AG04450 (cell line): ENCODE measurements at regions of chr10 and their contacts with region 1.

Region 1: GRCh38 chr10:63236113-63236935 is 103.2 kb downstream of the NRBF2 start:
- DNase-seq: peak; percentile 80
- H3K4me3 ChIP-seq: no peak overlapping the region
- H3K27ac ChIP-seq: no peak overlapping the region
- H3K27me3 ChIP-seq: no peaks in the 10 kb centered on the region
- CTCF ChIP-seq: no peak

Region 2: GRCh38 chr10:63268798-63269503 is 32.6 kb after region 1 on chr10:
- CTCF ChIA-PET with region 1: interaction called, 3 read pairs
- POLR2A ChIA-PET with region 1: interaction called, 12 read pairs
- DNase-seq: peak; percentile 84
- H3K4me3 ChIP-seq: peak overlapping the region; percentile 65
- H3K27ac ChIP-seq: peak overlapping the region; percentile 93
- H3K27me3 ChIP-seq: no peaks in the 10 kb centered on the region
- CTCF ChIP-seq: peak; percentile 33